Thyroid gland (tissue), 4 donors: ENCODE measurements at regions of chr7 and their contacts with region 1.

Region 1: GRCh38 chr7:108181073-108181985 is 51.2 kb upstream of the LAMB4 start:
- DNase-seq: no peak
- H3K4me3 ChIP-seq: no peak overlapping the region
- H3K27ac ChIP-seq: no peak overlapping the region
- H3K4me1 ChIP-seq: no peaks in the 10 kb centered on the region
- H3K27me3 ChIP-seq: no peaks in the 10 kb centered on the region
- CTCF ChIP-seq: peak; percentile 47 to 94 (median 66)
- POLR2A ChIP-seq: no peak

Region 2: GRCh38 chr7:107803009-107803610 is 378.2 kb before region 1 on chr7 and contains the start of gene SLC26A3:
- intact Hi-C with region 1: no loop called
- DNase-seq: no peak
- H3K4me3 ChIP-seq: no peak within 1 kb of the TSS
- H3K27ac ChIP-seq: no peak within 1 kb of the TSS
- H3K4me1 ChIP-seq: no peaks in the 10 kb centered on the region
- H3K27me3 ChIP-seq: no peaks in the 10 kb centered on the region
- CTCF ChIP-seq: no peak
- POLR2A ChIP-seq: no peak
- total RNA-seq, gene SLC26A3: 0.45 TPM in 1 of 4 donors, not detected in the others

Region 3: GRCh38 chr7:107917763-107918651 is 263.3 kb before region 1 on chr7:
- intact Hi-C with region 1: no loop called
- DNase-seq: no peak
- H3K4me3 ChIP-seq: no peak overlapping the region
- H3K27ac ChIP-seq: no peak overlapping the region
- H3K4me1 ChIP-seq: peaks cover 0 to 7% of the 10 kb centered on the region in 2 donors
- H3K27me3 ChIP-seq: no peaks in the 10 kb centered on the region
- CTCF ChIP-seq: no peak
- POLR2A ChIP-seq: no peak

Region 4: DNA sequence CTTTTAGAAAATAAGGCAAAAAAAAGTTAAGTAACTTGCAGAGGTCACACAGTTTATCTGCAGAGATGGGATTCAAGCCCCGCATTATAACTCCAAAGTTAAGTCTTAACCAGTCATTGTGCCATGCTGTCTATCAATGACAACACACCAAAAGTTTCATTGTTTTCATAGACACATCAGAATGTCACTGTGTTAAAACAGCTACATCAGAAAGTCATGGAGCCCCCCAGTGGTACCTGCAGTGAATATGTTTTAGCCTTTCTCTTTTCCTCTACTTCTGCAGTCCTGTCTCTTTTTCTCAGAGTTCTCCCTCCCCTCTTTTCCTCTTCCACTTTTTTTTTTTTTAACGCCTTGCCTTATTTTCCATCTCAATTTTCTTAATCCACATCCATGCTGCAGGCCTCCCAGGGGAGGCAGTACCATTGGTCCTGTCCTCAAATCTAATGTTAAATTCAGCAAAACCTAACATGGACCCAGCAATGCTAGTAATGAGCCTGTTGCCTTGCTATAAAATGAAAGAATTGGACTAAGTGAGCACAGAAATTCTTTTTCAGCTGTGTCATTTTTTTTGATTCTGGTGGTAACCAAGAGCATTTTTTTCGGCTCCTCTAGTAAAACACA is 278.7 kb after region 1 on chr7:
- intact Hi-C with region 1: loop called (anchors 10 kb)
- DNase-seq: peak; percentile 34 to 46
- H3K4me3 ChIP-seq: no peak overlapping the region
- H3K27ac ChIP-seq: no peak overlapping the region
- H3K4me1 ChIP-seq: peaks cover 0 to 4% of the 10 kb centered on the region in 2 donors
- H3K27me3 ChIP-seq: no peaks in the 10 kb centered on the region
- CTCF ChIP-seq: peak in 5 of 6 experiments; percentile 15 to 73 (median 55)
- POLR2A ChIP-seq: no peak

Region 5: DNA sequence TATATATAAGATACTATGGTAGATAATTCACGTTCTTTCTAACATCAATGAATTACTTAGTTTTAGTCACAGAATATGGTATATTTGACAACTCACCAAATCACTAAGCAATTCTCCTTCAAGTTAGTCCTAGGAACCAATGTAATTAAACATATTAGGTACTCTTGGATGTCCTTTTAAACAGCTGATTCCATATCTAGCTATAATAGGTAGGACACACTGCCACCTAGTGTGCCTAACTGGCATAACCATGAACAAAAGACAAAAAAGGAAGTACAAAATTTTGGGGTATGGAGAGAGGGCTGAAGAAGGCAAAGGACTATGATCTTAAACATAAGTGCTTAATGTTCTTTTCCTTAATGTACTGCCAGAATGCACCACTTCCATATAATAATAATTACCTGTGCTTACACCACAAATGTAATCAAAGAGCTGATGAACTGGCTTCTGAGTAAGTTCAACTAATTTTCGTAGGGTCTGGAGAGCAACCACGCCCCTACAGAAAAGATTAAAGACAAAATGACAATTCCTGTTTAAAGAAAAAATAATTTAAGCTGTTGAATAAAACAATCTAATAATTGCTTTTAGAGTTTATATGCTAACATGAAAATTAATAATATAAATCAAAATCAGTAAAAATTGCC is 315.9 kb after region 1 on chr7:
- intact Hi-C with region 1: loop called (anchors 10 kb)
- DNase-seq: peak; percentile 43 to 44
- H3K4me3 ChIP-seq: no peak overlapping the region
- H3K27ac ChIP-seq: no peak overlapping the region
- H3K4me1 ChIP-seq: no peaks in the 10 kb centered on the region
- H3K27me3 ChIP-seq: no peaks in the 10 kb centered on the region
- CTCF ChIP-seq: peak; percentile 60 to 88 (median 80)
- POLR2A ChIP-seq: no peak